ENCODE measurements at regions of chr13 and their contacts with region 1.

Region 1: GRCh38 chr13:59677966-59678814 is 485.5 kb downstream of the DIAPH3 start:
- DNase-seq: peak in 3 of 14 experiments; percentile 49 to 58 (median 55)
- ATAC-seq: peak; percentile 55
- H3K4me3 ChIP-seq: no peak overlapping the region
- H3K4me3 Mint-ChIP-seq: no peak overlapping the region
- H3K27ac ChIP-seq: no peak overlapping the region
- H3K27ac Mint-ChIP-seq: no peak overlapping the region
- H3K4me1 ChIP-seq: no peaks in the 10 kb centered on the region
- H3K4me1 Mint-ChIP-seq: peaks cover 8% of the 10 kb centered on the region
- H3K27me3 ChIP-seq: no peaks in the 10 kb centered on the region
- H3K27me3 Mint-ChIP-seq: no peaks in the 10 kb centered on the region
- CTCF ChIP-seq: peak; percentile 34

Region 2: DNA sequence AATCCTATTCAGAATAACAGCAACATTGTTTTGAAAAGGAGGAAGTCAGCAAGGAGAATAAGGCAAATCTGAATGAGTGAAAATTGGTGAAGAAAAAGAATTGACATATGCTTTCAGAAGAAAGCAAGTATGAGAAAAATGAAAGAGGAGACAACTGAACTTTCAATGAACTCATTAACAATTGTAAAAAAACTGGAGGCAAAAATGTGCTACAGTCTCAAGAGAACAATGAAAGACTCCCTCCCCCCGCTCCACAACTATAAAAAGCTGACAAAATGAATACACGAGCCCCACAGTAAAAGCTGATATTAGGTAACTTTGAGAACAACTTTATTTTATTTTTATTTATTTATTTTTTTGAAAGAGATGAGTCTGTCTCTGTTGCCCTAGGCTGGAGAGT is 112.4 kb after region 1 on chr13:
- CTCF ChIA-PET with region 1: no interaction called
- POLR2A ChIA-PET with region 1: no interaction called
- intact Hi-C with region 1: no loop called
- DNase-seq: no peak
- ATAC-seq: no peak
- H3K4me3 ChIP-seq: no peak overlapping the region
- H3K4me3 Mint-ChIP-seq: no peak overlapping the region
- H3K27ac ChIP-seq: no peak overlapping the region
- H3K27ac Mint-ChIP-seq: no peak overlapping the region
- H3K4me1 ChIP-seq: no peaks in the 10 kb centered on the region
- H3K4me1 Mint-ChIP-seq: no peaks in the 10 kb centered on the region
- H3K27me3 ChIP-seq: no peaks in the 10 kb centered on the region
- H3K27me3 Mint-ChIP-seq: no peaks in the 10 kb centered on the region
- CTCF ChIP-seq: no peak

Region 3: DNA sequence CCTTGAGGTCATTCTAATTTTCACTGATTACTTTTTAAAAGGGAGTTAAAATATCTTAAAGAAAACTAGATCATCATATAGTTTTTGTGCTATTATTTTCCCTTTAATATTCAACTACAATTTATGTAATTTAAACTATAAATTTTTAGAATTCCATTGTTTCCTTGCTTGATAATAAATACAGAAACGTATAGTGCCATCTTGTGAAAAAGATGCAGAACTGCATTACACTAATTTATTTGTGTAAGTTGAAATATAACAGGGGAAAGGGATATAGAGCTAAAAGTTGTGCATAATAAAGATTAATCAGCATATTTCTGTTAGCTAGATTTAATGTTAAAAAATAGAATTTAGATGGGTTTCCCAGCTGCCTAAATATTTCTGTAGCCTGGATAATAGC is 657.3 kb after region 1 on chr13:
- CTCF ChIA-PET with region 1: no interaction called
- POLR2A ChIA-PET with region 1: no interaction called
- intact Hi-C with region 1: loop called in 1 of 2 experiments (anchors 10 kb)
- DNase-seq: peak in 1 of 14 experiments; percentile 8
- ATAC-seq: no peak
- H3K4me3 ChIP-seq: no peak overlapping the region
- H3K4me3 Mint-ChIP-seq: no peak overlapping the region
- H3K27ac ChIP-seq: no peak overlapping the region
- H3K27ac Mint-ChIP-seq: no peak overlapping the region
- H3K4me1 ChIP-seq: no peaks in the 10 kb centered on the region
- H3K4me1 Mint-ChIP-seq: no peaks in the 10 kb centered on the region
- H3K27me3 ChIP-seq: peaks cover 0 to 10% of the 10 kb centered on the region in 2 experiments
- H3K27me3 Mint-ChIP-seq: peaks cover 11% of the 10 kb centered on the region
- CTCF ChIP-seq: peak; percentile 64

Region 4: GRCh38 chr13:60431108-60431700 is 753.0 kb after region 1 on chr13:
- CTCF ChIA-PET with region 1: interaction called, 3 read pairs
- POLR2A ChIA-PET with region 1: no interaction called
- intact Hi-C with region 1: loop called (anchors 1 to 2 kb)
- DNase-seq: peak in 3 of 14 experiments; percentile 71 to 76 (median 75)
- ATAC-seq: peak; percentile 89
- H3K4me3 ChIP-seq: no peak overlapping the region
- H3K4me3 Mint-ChIP-seq: no peak overlapping the region
- H3K27ac ChIP-seq: no peak overlapping the region
- H3K27ac Mint-ChIP-seq: no peak overlapping the region
- H3K4me1 ChIP-seq: peaks cover 6% of the 10 kb centered on the region
- H3K4me1 Mint-ChIP-seq: peaks cover 43% of the 10 kb centered on the region
- H3K27me3 ChIP-seq: no peaks in the 10 kb centered on the region
- H3K27me3 Mint-ChIP-seq: no peaks in the 10 kb centered on the region
- CTCF ChIP-seq: peak; percentile 96